Head of caudate nucleus (tissue), 42 donors: ENCODE measurements at regions of chr6 and their contacts with region 1.

Region 1: GRCh38 chr6:71388068-71388744 is 99.6 kb downstream of the OGFRL1 start:
- DNase-seq: no peak

Region 2: DNA sequence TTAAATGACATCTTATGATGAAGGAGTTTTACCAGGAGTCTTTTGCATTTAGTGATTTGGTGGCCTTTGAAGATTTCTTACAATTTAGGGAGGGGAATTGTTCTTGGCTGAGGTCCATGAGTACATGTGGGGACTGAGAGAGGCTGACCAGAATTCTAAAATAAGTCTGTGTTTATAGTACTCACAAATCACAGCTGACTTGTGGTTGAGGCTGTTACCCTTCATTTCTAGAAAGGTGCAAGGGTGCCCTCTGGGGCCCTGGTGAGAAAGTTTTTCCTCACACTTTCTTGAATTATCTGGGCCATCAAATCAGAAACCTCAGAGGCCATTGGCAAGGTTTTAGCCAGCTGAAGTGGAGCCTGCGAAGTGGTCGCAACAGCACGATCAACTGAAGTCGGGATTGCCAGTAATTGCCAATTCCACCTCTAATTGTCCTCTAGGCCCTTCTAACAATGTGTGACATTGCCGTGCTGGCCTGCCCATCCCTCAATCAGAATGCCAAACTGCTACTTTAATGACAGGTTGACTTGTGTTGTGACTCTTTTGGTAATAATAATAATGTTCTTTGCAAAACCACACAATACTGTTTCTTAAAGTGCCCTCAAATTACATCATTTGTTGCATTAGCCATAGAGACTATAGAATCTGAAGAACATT is 122.0 kb after region 1 on chr6:
- intact Hi-C with region 1: loop called (anchors 5 kb)
- DNase-seq: peak; percentile 13 to 76 (median 56)